ENCODE measurements at regions of chr4 and their contacts with region 1.

Region 1: GRCh38 chr4:140851032-140851636 is 94.9 kb upstream of the TBC1D9 start:
- DNase-seq: peak; percentile 48 to 70
- H3K4me3 ChIP-seq: no peak overlapping the region
- H3K4me3 Mint-ChIP-seq: no peak overlapping the region
- H3K27ac Mint-ChIP-seq: no peak overlapping the region
- H3K4me1 ChIP-seq: peaks cover 3% of the 10 kb centered on the region; the same call in 1 of the 2 replicates
- H3K4me1 Mint-ChIP-seq: peaks cover 5% of the 10 kb centered on the region
- H3K27me3 ChIP-seq: no peaks in the 10 kb centered on the region
- H3K27me3 Mint-ChIP-seq: no peaks in the 10 kb centered on the region
- CTCF ChIP-seq: peak; percentile 64 to 71

Region 2: DNA sequence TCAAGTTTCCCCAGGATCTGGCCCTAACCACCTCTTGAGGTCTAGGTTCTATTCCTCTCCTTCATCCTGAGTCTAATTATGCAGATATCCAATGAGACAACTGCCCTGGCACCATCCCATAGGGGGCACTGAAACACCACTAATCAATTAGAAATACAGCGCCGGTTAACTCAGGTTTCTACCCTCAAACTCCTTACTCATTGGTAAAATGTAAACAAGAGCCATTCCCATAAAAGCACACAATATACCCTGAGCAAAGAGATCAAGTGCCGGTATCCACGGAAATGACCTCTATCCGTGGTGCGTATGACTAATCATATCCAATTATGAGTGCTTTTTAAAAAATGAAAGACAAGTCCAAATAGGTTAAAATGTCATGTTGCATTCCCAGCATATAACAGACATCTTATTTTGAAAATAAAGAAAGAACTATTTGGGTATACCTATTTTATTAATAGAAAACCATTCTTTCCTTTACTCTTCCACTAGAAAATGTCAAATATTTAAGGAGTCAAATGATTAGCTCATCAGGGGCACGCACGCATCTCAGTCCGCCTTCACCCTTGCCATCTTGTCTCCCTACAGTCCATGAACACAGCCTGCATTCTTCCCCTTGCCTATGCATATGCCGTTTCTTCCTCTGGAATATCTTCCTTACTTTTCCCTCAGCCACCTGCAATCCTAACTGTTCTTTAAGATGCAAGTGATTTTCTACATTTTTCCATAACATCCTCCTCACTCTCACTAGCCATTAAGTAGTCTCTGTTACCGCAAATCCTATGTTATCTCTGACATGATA is 838.2 kb before region 1 on chr4:
- CTCF ChIA-PET with region 1: no interaction called
- POLR2A ChIA-PET with region 1: no interaction called
- intact Hi-C with region 1: loop called (anchors 10 kb)
- DNase-seq: peak; percentile 69 to 77
- H3K4me3 ChIP-seq: no peak overlapping the region
- H3K4me3 Mint-ChIP-seq: peak overlapping the region; percentile 0
- H3K27ac Mint-ChIP-seq: peak overlapping the region; percentile 23
- H3K4me1 ChIP-seq: peaks cover 18% of the 10 kb centered on the region
- H3K4me1 Mint-ChIP-seq: peaks cover 30% of the 10 kb centered on the region
- H3K27me3 ChIP-seq: no peaks in the 10 kb centered on the region
- H3K27me3 Mint-ChIP-seq: no peaks in the 10 kb centered on the region
- CTCF ChIP-seq: peak; percentile 56 to 65

Region 3: DNA sequence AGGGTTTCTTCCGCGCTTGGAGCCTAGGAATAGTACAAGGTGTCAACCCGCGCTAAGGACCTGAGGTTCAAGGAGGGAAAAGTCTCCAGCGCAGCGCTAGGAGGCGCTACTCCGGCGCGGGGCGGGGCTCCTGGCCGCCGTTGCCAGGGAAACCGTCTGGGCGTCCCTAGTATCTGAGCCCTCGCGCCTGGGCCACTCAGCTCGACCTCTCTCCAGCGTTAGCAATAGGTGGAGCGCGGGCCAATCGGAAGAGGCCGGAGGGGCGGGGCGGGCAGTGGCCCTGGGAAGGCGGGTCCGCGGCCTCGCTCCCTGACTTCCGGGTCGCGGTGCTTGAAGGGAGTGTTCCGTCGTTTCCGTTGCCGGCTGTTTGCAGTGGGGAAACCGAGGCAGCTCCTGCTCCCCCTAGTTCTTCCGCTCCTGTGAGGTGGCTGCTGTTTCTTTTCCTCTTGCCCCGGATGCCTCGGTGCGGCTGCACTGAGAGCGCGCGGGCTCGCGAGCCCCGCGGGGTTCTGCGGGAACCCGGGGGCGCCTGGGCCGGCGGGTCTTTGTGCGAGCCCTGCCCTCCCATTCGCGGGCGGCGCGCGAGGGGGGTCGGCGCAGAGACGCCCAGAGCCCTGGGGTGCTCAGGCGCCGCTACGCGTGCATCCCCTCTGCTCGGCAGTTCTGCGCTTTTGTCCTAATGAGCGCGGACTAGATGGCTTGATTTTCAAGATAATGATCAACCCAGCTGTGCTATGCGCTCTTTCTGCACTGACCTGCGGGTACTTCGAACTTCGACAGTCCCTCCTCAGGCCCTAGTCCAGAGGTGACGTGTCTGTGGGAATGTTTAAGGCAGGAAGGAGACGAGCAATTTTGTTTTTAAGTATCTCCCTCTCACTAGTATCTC is 327.0 kb before region 1 on chr4 and contains the start of gene ELMOD2:
- CTCF ChIA-PET with region 1: no interaction called
- POLR2A ChIA-PET with region 1: no interaction called
- intact Hi-C with region 1: loop called (anchors 2 kb)
- DNase-seq: peak; percentile 97 to 98
- H3K4me3 ChIP-seq: peak within 1 kb of the TSS; percentile 85
- H3K4me3 Mint-ChIP-seq: peak within 1 kb of the TSS; percentile 75
- H3K27ac Mint-ChIP-seq: peak within 1 kb of the TSS; percentile 39
- H3K4me1 ChIP-seq: peaks cover 5% of the 10 kb centered on the region; the same call in 1 of the 2 replicates
- H3K4me1 Mint-ChIP-seq: peaks cover under 1% of the 10 kb centered on the region
- H3K27me3 ChIP-seq: no peaks in the 10 kb centered on the region
- H3K27me3 Mint-ChIP-seq: no peaks in the 10 kb centered on the region
- CTCF ChIP-seq: peak; percentile 85 to 90
- total RNA-seq, gene ELMOD2: 26.2 and 28.1 TPM in 2 replicates

Region 4: DNA sequence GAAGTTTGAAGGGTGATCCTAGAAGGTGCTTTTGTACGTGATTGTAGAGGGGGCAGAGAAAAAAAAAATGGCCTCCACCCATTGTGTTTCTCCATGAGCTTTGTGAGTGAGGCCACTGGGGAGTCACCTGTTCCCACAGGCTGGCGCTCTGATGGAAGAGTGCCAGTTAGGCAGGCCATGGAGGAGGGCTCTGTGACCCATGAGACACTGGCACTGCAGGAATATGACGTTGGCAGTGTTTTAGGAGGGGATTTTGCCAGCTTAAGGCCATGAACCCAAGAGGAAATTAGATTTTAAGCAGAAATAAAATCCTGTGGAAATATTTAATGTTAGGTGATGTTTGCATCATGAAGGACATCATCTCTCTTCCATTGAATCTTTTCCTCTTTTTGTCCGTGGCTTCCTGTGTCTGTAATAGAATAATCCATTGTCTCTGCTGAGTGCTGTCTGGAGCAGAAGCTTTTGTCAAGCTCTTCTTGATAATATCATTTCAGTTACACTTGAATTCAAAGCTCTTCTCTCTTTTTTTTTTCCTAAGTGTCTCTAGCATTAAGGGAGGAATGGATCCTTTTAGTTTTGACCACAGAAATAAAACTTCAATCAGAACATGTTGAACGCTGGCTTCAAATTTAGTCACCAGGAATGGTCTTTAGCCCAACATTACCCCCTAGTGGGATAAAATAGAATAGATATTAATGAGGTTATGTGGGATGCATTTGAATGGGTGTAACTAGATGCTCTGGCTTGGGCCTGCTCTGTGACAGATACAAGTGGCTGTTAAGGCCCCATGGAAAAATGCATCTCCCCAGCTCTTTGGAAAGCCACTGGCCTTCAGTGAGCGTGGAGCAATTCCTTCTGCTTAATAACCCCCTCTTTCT is 241.3 kb before region 1 on chr4:
- CTCF ChIA-PET with region 1: interaction called, 8 read pairs
- POLR2A ChIA-PET with region 1: no interaction called
- intact Hi-C with region 1: loop called (anchors 1 kb)
- DNase-seq: peak in 1 of 2 experiments; percentile 47
- H3K4me3 ChIP-seq: no peak overlapping the region
- H3K4me3 Mint-ChIP-seq: no peak overlapping the region
- H3K27ac Mint-ChIP-seq: no peak overlapping the region
- H3K4me1 ChIP-seq: peaks cover 10% of the 10 kb centered on the region
- H3K4me1 Mint-ChIP-seq: no peaks in the 10 kb centered on the region
- H3K27me3 ChIP-seq: no peaks in the 10 kb centered on the region
- H3K27me3 Mint-ChIP-seq: no peaks in the 10 kb centered on the region
- CTCF ChIP-seq: peak; percentile 39 to 40

Region 5: GRCh38 chr4:140743194-140743931 is 107.8 kb before region 1 on chr4:
- CTCF ChIA-PET with region 1: interaction called, 6 read pairs
- POLR2A ChIA-PET with region 1: no interaction called
- intact Hi-C with region 1: loop called (anchors 1 kb)
- DNase-seq: peak in 1 of 2 experiments; percentile 27
- H3K4me3 ChIP-seq: no peak overlapping the region
- H3K4me3 Mint-ChIP-seq: no peak overlapping the region
- H3K27ac Mint-ChIP-seq: peak overlapping the region; percentile 67
- H3K4me1 ChIP-seq: peaks cover 44% of the 10 kb centered on the region
- H3K4me1 Mint-ChIP-seq: peaks cover 28% of the 10 kb centered on the region
- H3K27me3 ChIP-seq: no peaks in the 10 kb centered on the region
- H3K27me3 Mint-ChIP-seq: no peaks in the 10 kb centered on the region
- CTCF ChIP-seq: no peak

Region 6: GRCh38 chr4:140829825-140830224 is 21.3 kb before region 1 on chr4:
- CTCF ChIA-PET with region 1: no interaction called
- POLR2A ChIA-PET with region 1: no interaction called
- intact Hi-C with region 1: no loop called
- DNase-seq: no peak
- H3K4me3 ChIP-seq: no peak overlapping the region
- H3K4me3 Mint-ChIP-seq: no peak overlapping the region
- H3K27ac Mint-ChIP-seq: no peak overlapping the region
- H3K4me1 ChIP-seq: no peaks in the 10 kb centered on the region
- H3K4me1 Mint-ChIP-seq: peaks cover 4% of the 10 kb centered on the region
- H3K27me3 ChIP-seq: no peaks in the 10 kb centered on the region; the same call in 1 of the 2 replicates
- H3K27me3 Mint-ChIP-seq: no peaks in the 10 kb centered on the region
- CTCF ChIP-seq: no peak